ENCODE measurements at regions of chr2 and their contacts with region 1.

Region 1: GRCh38 chr2:41847744-41848441 is 199.9 kb upstream of the PKDCC start:
- DNase-seq: peak; percentile 96
- ATAC-seq: peak; percentile 89
- H3K4me3 ChIP-seq: no peak overlapping the region
- H3K27ac ChIP-seq: peak overlapping the region; percentile 60
- H3K4me1 ChIP-seq: peaks cover 51% of the 10 kb centered on the region
- H3K27me3 ChIP-seq: no peaks in the 10 kb centered on the region; a peak in 1 of 5 replicates
- CTCF ChIP-seq: no peak
- EP300 ChIP-seq: peak; percentile 99 to 100
- POLR2A ChIP-seq: no peak
- RAD21 ChIP-seq: no peak

Region 2: DNA sequence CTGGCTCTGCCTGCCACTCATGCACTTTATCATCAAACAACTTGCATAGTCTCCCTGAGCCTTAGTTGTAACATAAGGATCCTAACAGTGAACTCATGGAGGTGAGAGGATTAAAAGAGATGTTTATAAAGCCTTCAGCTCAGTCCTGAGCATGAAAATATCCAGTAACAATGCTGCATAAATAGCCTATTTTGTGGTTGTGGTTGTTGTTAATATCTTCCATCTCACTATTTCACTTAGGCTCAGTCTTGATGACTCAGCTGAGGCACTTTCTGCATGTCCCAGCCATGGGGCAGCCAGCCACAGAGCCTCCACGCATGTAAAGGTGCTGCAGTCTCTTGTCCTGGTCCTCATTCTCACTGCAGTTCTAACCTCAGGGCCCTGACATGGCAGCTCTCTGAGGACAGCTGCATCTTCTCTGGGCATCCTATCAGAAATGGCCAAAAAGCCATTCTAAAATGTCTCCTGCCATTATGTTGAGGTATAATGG is 18.8 kb before region 1 on chr2:
- CTCF ChIA-PET with region 1: no interaction called
- POLR2A ChIA-PET with region 1: interaction called, 17 read pairs
- in situ Hi-C with region 1: no loop called
- intact Hi-C with region 1: no loop called
- DNase-seq: no peak
- ATAC-seq: peak; percentile 9; the same call in 1 of the 3 replicates
- H3K4me3 ChIP-seq: no peak overlapping the region
- H3K27ac ChIP-seq: no peak overlapping the region
- H3K4me1 ChIP-seq: peaks cover 29% of the 10 kb centered on the region
- H3K27me3 ChIP-seq: peaks cover 0 to 64% of the 10 kb centered on the region in 2 experiments; a peak in 4 of 5 replicates
- CTCF ChIP-seq: no peak
- EP300 ChIP-seq: no peak
- POLR2A ChIP-seq: no peak
- RAD21 ChIP-seq: no peak

Region 3: DNA sequence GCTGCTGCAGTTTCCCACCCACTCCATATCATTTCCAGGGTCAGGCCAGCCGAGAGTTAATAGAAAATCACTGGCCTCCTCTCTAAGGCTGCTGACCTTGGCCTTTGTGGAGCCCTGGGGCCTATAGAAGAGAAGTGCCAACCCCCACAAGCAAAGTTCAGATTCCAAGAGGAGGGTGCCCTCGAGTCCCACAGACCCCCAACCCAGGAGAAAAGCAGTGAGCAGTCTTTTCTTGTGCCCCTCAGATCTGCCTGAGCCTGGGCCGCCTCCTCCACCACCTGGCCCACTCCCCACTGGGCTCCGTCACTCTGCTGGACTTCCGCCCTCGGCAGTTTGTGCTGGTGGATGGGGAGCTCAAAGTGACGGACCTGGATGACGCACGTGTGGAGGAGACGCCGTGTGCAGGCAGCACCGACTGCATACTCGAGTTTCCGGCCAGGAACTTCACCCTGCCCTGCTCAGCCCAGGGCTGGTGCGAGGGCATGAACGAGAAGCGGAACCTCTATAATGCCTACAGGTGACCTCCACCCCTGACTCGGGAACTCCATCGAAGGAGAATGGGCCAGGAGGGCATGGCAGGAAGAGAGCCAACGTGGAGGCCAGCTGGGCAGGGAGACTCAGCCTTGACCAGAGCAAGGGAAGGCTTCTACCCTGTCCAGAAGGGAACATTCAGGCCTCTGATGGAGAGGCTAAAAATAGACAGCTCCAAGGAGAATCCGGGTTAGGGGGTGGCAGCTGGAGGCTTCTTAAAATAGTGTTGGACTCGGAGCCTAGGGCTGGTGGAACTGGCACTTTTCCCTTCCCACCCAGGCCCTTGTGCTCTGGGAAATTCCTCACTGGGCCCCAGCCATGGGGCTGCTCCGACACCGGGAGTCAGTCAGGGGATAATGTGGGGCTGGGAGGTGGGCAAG is 206.2 kb after region 1 on chr2:
- CTCF ChIA-PET with region 1: no interaction called
- POLR2A ChIA-PET with region 1: interaction called, 24 read pairs
- in situ Hi-C with region 1: no loop called
- intact Hi-C with region 1: no loop called
- DNase-seq: peak; percentile 55
- ATAC-seq: peak; percentile 28
- H3K4me3 ChIP-seq: peak overlapping the region in 1 of 3 experiments; percentile 32; a peak in 2 of 6 replicates
- H3K27ac ChIP-seq: peak overlapping the region; percentile 39
- H3K4me1 ChIP-seq: peaks cover 91% of the 10 kb centered on the region
- H3K27me3 ChIP-seq: peaks cover 0 to under 1% of the 10 kb centered on the region in 2 experiments; a peak in 1 of 5 replicates
- CTCF ChIP-seq: 0 out of 2 replicates have a peak, but pooled peaks have one; percentile 8
- EP300 ChIP-seq: peak in 1 of 2 experiments; percentile 75; a peak in 2 of 4 replicates
- POLR2A ChIP-seq: no peak
- RAD21 ChIP-seq: no peak